ENCODE measurements at regions of chr20 and their contacts with region 1.

Region 1: DNA sequence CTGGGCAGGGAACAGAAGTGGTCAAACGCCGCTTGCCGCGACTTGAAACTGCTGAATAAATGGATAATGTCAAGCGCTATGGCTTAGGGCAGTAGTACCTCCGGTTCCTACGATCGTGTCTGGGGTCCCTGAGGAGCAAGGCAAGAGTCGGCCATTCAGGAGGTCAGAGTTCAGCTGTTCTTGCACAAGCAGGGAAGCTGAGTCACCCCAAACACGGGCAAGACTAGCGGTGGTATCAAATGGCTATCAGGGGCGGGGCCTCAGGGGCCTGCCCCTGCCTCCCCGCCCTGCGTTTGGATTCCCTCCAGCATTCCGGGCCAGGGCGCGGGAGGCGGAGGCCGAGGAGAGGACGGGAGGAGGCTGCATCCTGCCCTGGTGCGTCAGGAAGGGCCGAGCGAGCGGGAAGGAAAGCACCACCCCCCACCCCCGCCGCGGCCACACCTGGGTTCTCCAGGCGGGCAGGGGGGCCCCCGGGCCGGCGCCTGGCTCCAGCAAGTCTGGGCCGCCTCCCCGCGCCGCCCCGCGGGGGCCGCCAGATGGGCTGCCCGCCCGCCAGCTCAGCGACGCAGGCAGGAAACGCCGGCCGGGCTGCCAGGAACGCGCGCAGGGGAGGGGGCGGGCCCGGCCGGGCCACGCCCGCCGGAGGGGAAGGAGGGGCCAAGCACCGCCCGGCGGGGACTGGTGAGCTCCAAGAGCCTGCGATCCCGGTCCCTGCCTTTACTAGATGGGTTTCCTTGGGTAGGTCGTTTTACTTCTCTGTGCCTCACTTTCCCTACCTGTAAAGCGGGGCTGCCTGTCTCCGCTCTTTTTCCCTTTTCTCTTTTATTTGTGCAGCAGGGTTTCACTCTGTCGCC is 32.2 kb upstream of the ID1 start:
- DNase-seq: peak; percentile 83 to 99
- ATAC-seq: peak; percentile 79
- H3K4me3 ChIP-seq: peak overlapping the region; percentile 62
- H3K27ac ChIP-seq: peak overlapping the region; percentile 93 to 99
- H3K4me1 ChIP-seq: peaks cover 53% of the 10 kb centered on the region
- CTCF ChIP-seq: no peak
- EP300 ChIP-seq: peak; percentile 92 to 98
- POLR2A ChIP-seq: peak; percentile 52
- RAD21 ChIP-seq: peak in 1 of 2 experiments; percentile 44; a peak in 3 of 5 replicates

Region 2: DNA sequence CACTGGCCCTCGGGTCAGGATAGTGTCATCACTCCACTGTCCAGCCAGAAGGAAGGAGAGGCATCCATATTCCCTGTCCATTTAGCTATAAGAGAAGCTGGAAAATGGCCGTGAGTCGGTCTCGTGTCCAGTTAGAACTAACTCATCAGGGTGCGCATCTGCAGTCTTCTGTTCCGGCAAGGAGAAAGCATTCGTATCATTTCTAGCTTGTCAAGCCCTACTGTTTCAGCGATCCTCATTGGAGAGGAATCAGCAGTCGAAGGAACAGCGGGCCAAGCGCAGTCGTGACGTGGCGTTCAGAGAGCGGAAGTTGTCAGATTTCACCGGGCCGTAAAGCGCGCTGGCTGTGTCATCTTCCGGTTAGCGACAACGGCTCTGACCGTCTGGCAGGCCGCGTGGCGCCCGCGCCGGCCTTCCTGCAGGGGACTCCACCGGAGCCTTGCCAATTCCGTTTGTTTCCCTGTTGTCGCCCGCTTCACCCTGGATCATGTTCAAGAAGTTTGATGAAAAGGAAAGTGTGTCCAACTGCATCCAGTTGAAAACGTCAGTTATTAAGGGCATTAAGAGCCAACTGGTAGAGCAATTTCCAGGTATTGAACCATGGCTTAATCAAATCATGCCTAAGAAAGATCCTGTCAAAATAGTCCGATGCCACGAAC is 25.8 kb before region 1 on chr20:
- CTCF ChIA-PET with region 1: interaction called, 549 read pairs
- POLR2A ChIA-PET with region 1: no interaction called
- DNase-seq: no peak
- ATAC-seq: no peak
- H3K4me3 ChIP-seq: no peak overlapping the region
- H3K27ac ChIP-seq: no peak overlapping the region
- H3K4me1 ChIP-seq: peaks cover 7% of the 10 kb centered on the region
- CTCF ChIP-seq: no peak
- EP300 ChIP-seq: no peak
- POLR2A ChIP-seq: no peak
- RAD21 ChIP-seq: no peak

Region 3: DNA sequence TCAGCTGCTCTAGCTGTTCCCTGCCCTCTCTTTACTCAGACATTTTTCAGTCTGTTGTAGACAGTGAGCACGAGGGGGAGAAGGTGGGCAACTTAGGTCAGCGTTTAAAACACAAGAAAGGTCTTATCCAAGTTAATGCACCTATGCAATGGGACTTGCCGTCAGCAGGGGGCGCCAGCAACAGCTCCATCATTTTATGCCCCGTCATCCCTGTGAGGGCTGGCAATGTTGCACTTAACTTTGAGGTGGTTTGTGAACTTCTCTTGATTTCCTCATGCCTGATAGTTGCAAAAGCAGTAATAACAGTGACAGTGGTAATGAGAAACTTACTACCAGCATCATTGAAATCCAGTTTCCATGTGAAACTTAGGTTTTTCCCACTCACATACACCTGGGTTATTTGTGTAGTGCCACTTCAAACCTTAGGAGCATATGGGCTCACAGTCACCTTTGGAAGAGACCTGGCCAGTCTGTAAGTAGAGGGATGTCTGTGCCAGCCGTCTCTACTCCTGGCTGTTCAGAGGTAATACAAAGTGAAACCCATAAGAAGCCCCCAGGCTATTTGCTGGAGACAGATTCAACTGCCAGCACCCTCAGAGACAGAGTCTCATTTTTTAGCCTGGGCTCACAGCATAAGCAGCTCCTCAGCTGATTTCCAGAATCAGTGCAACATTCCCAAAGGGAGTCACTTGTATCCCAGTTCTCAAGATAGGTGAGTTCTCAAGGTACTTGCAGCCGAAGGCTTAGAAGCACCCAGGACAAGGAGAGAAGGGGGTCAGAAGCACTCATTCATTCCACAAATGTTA is 12.6 kb before region 1 on chr20:
- CTCF ChIA-PET with region 1: interaction called, 549 read pairs
- POLR2A ChIA-PET with region 1: interaction called, 21 read pairs
- DNase-seq: peak; percentile 78 to 94
- ATAC-seq: peak; percentile 56 to 70
- H3K4me3 ChIP-seq: no peak overlapping the region
- H3K27ac ChIP-seq: peak overlapping the region; percentile 90 to 97
- H3K4me1 ChIP-seq: peaks cover 48% of the 10 kb centered on the region
- CTCF ChIP-seq: peak; percentile 95
- EP300 ChIP-seq: no peak
- POLR2A ChIP-seq: no peak
- RAD21 ChIP-seq: peak; percentile 65 to 66

Region 4: GRCh38 chr20:31587545-31588389 is 14.8 kb after region 1 on chr20:
- CTCF ChIA-PET with region 1: interaction called, 65 read pairs
- POLR2A ChIA-PET with region 1: interaction called, 63 read pairs
- DNase-seq: no peak
- ATAC-seq: peak; percentile 72 to 81
- H3K4me3 ChIP-seq: peak overlapping the region; percentile 45
- H3K27ac ChIP-seq: peak overlapping the region; percentile 98
- H3K4me1 ChIP-seq: peaks cover 32% of the 10 kb centered on the region
- CTCF ChIP-seq: no peak
- EP300 ChIP-seq: no peak
- POLR2A ChIP-seq: peak; percentile 2; the same call in 1 of the 2 replicates
- RAD21 ChIP-seq: no peak

Region 5: DNA sequence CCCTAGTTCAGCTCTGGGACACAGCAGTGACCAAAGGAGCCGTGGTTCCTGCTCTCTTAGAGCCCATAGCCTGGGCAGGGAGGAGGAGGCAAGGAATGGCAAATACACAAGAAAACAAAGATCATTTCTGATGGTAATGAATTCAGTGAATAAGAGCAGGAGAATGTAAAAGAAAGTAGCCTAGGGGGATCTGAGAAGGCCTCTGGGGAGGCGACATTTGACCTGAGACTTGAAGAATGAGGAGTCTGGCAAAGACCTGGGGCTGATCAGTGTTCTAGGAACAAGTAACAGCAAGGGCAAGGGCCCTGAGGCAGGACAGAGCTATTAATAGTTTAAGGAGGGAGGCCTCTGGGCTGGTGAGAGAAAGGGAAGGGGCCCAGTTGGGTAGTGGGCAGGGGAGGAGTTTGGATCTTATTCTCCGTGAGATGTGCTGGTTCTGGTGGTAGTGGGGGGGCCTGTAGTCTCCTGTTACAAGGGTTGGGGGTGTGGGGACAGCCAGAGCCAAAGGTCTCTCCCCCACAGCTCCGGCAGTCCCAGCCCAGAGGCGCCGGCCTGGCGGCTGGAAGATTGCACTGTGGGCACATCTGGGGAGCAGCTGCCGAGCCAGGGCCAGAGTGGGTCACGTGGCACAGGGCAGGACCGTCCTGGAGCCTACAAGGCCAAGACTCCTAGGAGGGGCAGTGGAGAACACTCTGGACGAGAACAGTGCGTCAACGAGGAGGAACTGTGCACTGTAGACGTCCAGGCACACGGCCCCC is 22.9 kb after region 1 on chr20:
- CTCF ChIA-PET with region 1: interaction called, 903 read pairs
- POLR2A ChIA-PET with region 1: interaction called, 63 read pairs
- DNase-seq: peak; percentile 74 to 95
- ATAC-seq: peak; percentile 68 to 74
- H3K4me3 ChIP-seq: peak overlapping the region; percentile 62
- H3K27ac ChIP-seq: peak overlapping the region; percentile 98
- H3K4me1 ChIP-seq: peaks cover 48% of the 10 kb centered on the region
- CTCF ChIP-seq: no peak
- EP300 ChIP-seq: peak in 1 of 2 experiments; percentile 55; a peak in 2 of 5 replicates
- POLR2A ChIP-seq: peak; percentile 42
- RAD21 ChIP-seq: no peak

Region 6: DNA sequence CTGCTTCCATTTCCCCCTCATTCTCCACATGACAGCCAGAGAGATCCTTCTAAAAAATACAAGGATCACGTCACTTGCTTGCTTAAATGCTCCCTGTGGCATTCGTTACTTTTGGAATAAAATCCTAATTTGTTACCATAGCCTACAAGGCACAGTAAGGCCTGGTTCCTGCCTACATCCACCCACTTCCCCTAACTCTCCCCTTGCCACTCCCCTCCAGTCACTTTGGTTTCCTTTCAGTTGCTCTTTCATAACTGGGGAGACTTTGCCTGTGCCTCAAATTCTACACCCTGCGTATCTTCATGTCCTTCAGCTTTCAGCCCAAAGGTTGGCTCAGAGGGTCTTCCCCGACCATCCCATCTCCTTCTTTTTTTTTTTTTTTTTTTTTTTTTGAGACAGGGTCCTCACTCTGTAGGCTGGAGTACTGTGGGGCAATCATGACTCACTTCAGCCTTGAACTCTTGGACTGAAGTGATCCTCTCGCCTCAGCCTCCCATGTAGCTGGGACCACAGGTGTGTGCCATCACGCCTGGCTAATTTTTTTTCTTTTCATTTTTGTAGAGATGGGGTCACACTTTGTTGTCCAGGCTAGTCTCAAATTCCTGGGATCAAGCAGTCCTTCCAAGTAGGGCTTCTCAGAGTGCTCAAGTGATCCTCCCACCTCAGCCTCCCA is 44.6 kb after region 1 on chr20:
- CTCF ChIA-PET with region 1: interaction called, 903 read pairs
- POLR2A ChIA-PET with region 1: interaction called, 70 read pairs
- DNase-seq: no peak
- ATAC-seq: no peak
- H3K4me3 ChIP-seq: no peak overlapping the region
- H3K27ac ChIP-seq: no peak overlapping the region
- H3K4me1 ChIP-seq: peaks cover 1% of the 10 kb centered on the region
- CTCF ChIP-seq: no peak
- EP300 ChIP-seq: no peak
- POLR2A ChIP-seq: no peak
- RAD21 ChIP-seq: no peak

Region 7: GRCh38 chr20:31996996-31997395 is 424.1 kb after region 1 on chr20:
- CTCF ChIA-PET with region 1: no interaction called
- POLR2A ChIA-PET with region 1: no interaction called
- DNase-seq: no peak
- ATAC-seq: no peak
- H3K4me3 ChIP-seq: no peak overlapping the region
- H3K27ac ChIP-seq: no peak overlapping the region
- H3K4me1 ChIP-seq: no peaks in the 10 kb centered on the region
- CTCF ChIP-seq: no peak
- EP300 ChIP-seq: no peak
- POLR2A ChIP-seq: no peak
- RAD21 ChIP-seq: no peak